Caco-2 (cell line): ENCODE measurements at regions of chr15 and their contacts with region 1.

Region 1: GRCh38 chr15:46091860-46092450 is 457.1 kb downstream of the SQOR start:
- DNase-seq: peak in 1 of 2 experiments; percentile 40
- H3K4me3 ChIP-seq: no peak overlapping the region
- H3K4me3 Mint-ChIP-seq: no peak overlapping the region
- H3K27ac Mint-ChIP-seq: no peak overlapping the region
- H3K4me1 ChIP-seq: no peaks in the 10 kb centered on the region
- H3K4me1 Mint-ChIP-seq: no peaks in the 10 kb centered on the region
- H3K27me3 ChIP-seq: no peaks in the 10 kb centered on the region
- H3K27me3 Mint-ChIP-seq: no peaks in the 10 kb centered on the region
- CTCF ChIP-seq: peak; percentile 37 to 53

Region 2: GRCh38 chr15:45674677-45675076 is 417.3 kb before region 1 on chr15:
- CTCF ChIA-PET with region 1: no interaction called
- POLR2A ChIA-PET with region 1: no interaction called
- intact Hi-C with region 1: no loop called
- DNase-seq: no peak
- H3K4me3 ChIP-seq: no peak overlapping the region
- H3K4me3 Mint-ChIP-seq: no peak overlapping the region
- H3K27ac Mint-ChIP-seq: no peak overlapping the region
- H3K4me1 ChIP-seq: no peaks in the 10 kb centered on the region
- H3K4me1 Mint-ChIP-seq: no peaks in the 10 kb centered on the region
- H3K27me3 ChIP-seq: no peaks in the 10 kb centered on the region
- H3K27me3 Mint-ChIP-seq: peaks cover 3% of the 10 kb centered on the region
- CTCF ChIP-seq: no peak

Region 3: GRCh38 chr15:46039703-46040102 is 52.3 kb before region 1 on chr15:
- CTCF ChIA-PET with region 1: no interaction called
- POLR2A ChIA-PET with region 1: no interaction called
- intact Hi-C with region 1: no loop called
- DNase-seq: no peak
- H3K4me3 ChIP-seq: no peak overlapping the region
- H3K4me3 Mint-ChIP-seq: no peak overlapping the region
- H3K27ac Mint-ChIP-seq: no peak overlapping the region
- H3K4me1 ChIP-seq: no peaks in the 10 kb centered on the region
- H3K4me1 Mint-ChIP-seq: no peaks in the 10 kb centered on the region
- H3K27me3 ChIP-seq: no peaks in the 10 kb centered on the region
- H3K27me3 Mint-ChIP-seq: peaks cover 3% of the 10 kb centered on the region
- CTCF ChIP-seq: no peak

Region 4: DNA sequence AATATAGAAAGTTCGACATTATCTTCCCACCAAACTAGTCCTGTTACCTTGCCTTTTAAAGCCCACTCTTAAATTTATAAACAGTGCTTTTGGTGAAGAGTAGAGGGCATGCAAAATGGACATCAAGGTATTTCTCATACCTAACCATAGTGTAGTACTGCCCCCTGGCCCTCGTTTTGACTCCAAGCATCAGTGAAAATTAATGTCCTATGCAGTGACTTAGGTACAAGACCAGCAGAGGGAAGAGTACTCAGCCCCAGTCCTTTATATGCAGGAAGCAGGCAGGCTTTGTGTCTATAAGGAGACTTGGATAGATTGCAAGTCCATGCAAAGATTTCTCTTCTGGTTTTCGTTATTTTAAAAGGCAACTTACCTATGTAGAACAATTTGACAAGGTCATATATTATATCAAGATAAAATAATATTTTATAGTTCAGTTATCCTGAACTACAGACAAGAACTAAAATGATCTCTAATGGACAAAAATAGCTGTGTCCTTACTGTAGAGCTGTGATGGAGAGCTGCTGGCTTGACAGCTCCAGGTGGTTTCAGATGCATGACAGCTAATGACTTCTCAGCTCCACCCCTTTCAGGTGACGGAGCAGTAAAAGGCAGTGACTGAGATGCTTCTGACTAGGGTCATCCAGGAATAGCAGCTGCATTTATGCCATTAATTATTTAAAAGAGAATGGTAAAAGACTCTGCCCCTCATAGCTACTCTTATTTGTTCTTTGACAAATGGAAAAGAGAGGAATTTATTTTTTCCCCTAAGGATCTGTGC is 189.0 kb after region 1 on chr15:
- CTCF ChIA-PET with region 1: no interaction called
- POLR2A ChIA-PET with region 1: no interaction called
- intact Hi-C with region 1: loop called (anchors 1 kb)
- DNase-seq: peak; percentile 38 to 41
- H3K4me3 ChIP-seq: no peak overlapping the region
- H3K4me3 Mint-ChIP-seq: no peak overlapping the region
- H3K27ac Mint-ChIP-seq: no peak overlapping the region
- H3K4me1 ChIP-seq: no peaks in the 10 kb centered on the region
- H3K4me1 Mint-ChIP-seq: no peaks in the 10 kb centered on the region
- H3K27me3 ChIP-seq: no peaks in the 10 kb centered on the region
- H3K27me3 Mint-ChIP-seq: no peaks in the 10 kb centered on the region
- CTCF ChIP-seq: peak; percentile 35 to 41